Breast epithelium (tissue), 4 donors: ENCODE measurements at regions of chr10 and their contacts with region 1.

Region 1: GRCh38 chr10:77637859-77638765 is 504 bp upstream of the KCNMA1 start:
- DNase-seq: no peak
- H3K4me3 ChIP-seq: peak overlapping the region; percentile 54 to 76 (median 62)
- H3K27ac ChIP-seq: no peak overlapping the region
- H3K4me1 ChIP-seq: no peaks in the 10 kb centered on the region
- H3K27me3 ChIP-seq: peaks cover 2 to 38% of the 10 kb centered on the region in 2 donors
- CTCF ChIP-seq: no peak
- POLR2A ChIP-seq: no peak

Region 2: DNA sequence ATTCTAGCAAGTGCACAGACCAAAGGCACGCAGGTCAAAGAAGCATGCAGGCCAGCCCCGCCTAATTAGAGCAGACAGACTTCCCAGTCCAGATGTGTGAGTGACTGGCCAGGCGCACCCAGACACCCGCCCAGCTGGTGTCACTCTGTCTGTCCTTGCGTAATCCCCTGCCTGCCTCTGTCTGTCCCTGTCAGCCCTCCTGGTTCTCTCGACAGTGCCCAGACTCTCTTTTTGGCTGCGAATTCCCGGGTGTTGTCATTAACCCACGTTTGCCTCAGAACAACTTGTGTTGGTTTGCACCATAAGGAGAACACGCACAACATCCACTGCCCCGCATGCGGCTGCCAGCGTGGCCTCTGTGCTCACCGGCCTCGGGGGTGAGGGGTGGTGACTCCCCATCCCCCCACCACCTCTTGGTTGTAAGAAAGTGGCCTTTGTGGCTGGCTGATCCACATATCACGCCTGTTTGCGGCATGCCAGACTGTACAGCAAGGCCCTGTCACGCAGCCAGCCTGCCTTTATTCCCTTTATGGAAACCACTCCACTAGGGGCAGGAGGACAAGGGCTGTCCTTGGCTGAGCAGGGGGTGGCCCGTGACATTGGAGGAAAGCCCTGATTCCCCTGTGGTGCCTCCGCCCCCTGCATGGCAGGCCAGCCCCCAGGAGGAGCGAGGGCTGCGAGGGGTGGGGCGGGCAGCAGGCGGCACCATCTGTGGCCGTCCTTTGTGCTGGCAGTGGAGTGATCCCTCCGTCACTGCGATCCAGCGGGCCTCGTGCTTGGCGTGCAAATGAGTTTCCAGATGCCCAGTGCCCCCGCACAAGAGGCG is 1636.4 kb after region 1 on chr10:
- intact Hi-C with region 1: loop called (anchors 5 kb)
- DNase-seq: peak in 1 of 2 donors; percentile 80
- H3K4me3 ChIP-seq: peak overlapping the region in 1 of 3 donors; percentile 26
- H3K27ac ChIP-seq: peak overlapping the region; percentile 76 to 86
- H3K4me1 ChIP-seq: peaks cover 11 to 28% of the 10 kb centered on the region in 2 donors
- H3K27me3 ChIP-seq: no peaks in the 10 kb centered on the region
- CTCF ChIP-seq: peak in 2 of 3 donors; percentile 18 to 34
- POLR2A ChIP-seq: no peak